GM12878 (cell line): ENCODE measurements at regions of chrX and their contacts with region 1.

Region 1: GRCh38 chrX:103533511-103534216 is 14.4 kb upstream of the RAB40A start:
- DNase-seq: peak; percentile 21
- ATAC-seq: peak; percentile 82
- H3K4me3 ChIP-seq: no peak overlapping the region
- H3K27ac ChIP-seq: no peak overlapping the region
- H3K4me1 ChIP-seq: no peaks in the 10 kb centered on the region
- H3K27me3 ChIP-seq: no peaks in the 10 kb centered on the region
- CTCF ChIP-seq: peak; percentile 67 to 89 (median 82)
- EP300 ChIP-seq: no peak
- POLR2A ChIP-seq: no peak
- RAD21 ChIP-seq: peak; percentile 86

Region 2: DNA sequence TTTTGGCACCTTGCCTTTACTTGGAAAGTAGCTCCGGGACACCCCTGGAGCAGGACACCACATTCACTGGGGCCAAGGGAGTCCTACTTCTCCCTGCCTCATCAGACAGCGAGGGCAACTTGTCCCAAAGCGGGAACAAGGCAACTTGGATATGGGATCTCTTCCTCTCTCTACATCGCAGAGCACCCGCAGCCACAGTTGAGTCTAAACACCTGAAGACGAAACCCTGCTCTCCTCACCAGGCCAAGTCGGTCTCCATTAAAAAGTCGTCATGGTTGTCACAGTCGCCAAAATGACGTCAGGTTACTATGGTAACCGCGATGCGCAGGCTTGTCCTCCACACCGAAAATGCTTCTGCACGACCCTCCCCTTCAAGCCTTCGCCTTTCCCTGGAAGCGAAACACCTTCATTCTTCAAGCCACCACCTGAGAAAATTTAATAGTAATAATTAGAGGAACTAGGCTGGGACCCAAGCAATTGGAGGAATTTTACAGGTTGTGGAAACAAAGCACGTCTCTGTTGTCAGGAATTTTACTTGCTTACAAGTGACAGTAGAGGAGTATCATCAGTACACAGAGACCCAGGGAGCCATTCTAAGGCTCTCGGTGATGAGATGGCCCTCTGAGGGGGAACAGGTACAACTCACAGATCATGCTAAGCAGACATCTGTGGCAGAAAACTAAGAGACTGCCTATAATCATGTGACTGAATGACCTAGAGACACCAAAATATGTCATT is 21.2 kb after region 1 on chrX:
- CTCF ChIA-PET with region 1: no interaction called
- POLR2A ChIA-PET with region 1: no interaction called
- RAD21 ChIA-PET with region 1: no interaction called
- SMC1A ChIA-PET with region 1: no interaction called
- in situ Hi-C with region 1: no loop called
- intact Hi-C with region 1: no loop called
- DNase-seq: no peak
- ATAC-seq: peak; percentile 94
- H3K4me3 ChIP-seq: peak overlapping the region; percentile 58
- H3K27ac ChIP-seq: peak overlapping the region; percentile 35
- H3K4me1 ChIP-seq: no peaks in the 10 kb centered on the region; the same call in 1 of the 2 replicates
- H3K27me3 ChIP-seq: no peaks in the 10 kb centered on the region; a peak in 1 of 4 replicates
- CTCF ChIP-seq: no peak
- EP300 ChIP-seq: no peak
- POLR2A ChIP-seq: peak; percentile 66
- RAD21 ChIP-seq: no peak

Region 3: DNA sequence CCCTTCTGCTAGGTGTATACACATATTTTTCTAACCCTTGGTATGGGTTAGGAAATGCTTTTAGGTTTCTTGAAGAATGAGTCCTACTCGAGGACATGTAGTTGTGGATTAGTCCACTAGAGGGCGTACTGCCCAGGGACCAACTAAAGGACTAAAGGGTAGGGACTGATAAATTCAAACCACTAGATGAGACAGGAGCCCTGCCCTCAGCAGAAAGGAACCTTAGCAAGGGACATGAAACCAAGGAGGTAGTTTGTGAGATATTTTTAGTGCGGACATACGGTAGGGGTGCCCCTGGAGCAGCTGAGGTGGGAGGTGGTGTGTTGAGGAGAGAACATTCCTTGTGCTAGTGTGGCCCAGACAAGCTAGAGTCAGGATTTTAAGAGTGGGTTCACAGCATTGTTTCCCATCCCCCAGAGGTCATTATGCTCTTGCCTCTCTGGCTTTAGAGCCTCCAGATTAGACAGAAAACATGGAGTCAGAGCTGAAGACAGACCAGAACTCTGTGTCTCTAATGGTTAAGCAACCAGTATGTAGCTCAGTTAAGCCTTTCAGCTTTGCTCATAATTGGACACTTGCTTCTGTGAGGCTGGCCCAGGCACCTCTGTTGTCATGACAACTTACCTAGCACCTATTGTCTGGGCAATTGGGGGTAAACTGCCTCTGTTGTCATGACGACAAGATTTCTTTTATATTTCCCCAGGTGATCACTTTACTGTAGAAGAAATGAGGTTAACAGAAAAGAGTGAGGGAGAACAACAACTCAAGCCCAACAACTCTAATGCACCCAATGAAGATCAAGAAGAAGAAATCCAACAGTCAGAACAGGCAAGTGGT is 178.1 kb after region 1 on chrX:
- CTCF ChIA-PET with region 1: interaction called, 9 read pairs
- POLR2A ChIA-PET with region 1: no interaction called
- RAD21 ChIA-PET with region 1: no interaction called
- SMC1A ChIA-PET with region 1: interaction called, 5 read pairs
- in situ Hi-C with region 1: no loop called
- intact Hi-C with region 1: loop called (anchors 2 kb)
- DNase-seq: no peak
- ATAC-seq: peak; percentile 82
- H3K4me3 ChIP-seq: no peak overlapping the region
- H3K27ac ChIP-seq: no peak overlapping the region
- H3K4me1 ChIP-seq: no peaks in the 10 kb centered on the region
- H3K27me3 ChIP-seq: no peaks in the 10 kb centered on the region
- CTCF ChIP-seq: peak; percentile 61 to 76 (median 72)
- EP300 ChIP-seq: no peak
- POLR2A ChIP-seq: no peak
- RAD21 ChIP-seq: peak; percentile 50

Region 4: GRCh38 chrX:103817502-103817901 is 283.8 kb after region 1 on chrX:
- CTCF ChIA-PET with region 1: interaction called, 8 read pairs
- POLR2A ChIA-PET with region 1: interaction called, 5 read pairs
- RAD21 ChIA-PET with region 1: interaction called, 3 read pairs
- SMC1A ChIA-PET with region 1: interaction called, 4 read pairs
- in situ Hi-C with region 1: loop called (anchors 5 kb)
- intact Hi-C with region 1: loop called (anchors 1 kb)
- DNase-seq: peak; percentile 11
- ATAC-seq: peak; percentile 82
- H3K4me3 ChIP-seq: no peak overlapping the region
- H3K27ac ChIP-seq: no peak overlapping the region
- H3K4me1 ChIP-seq: no peaks in the 10 kb centered on the region
- H3K27me3 ChIP-seq: no peaks in the 10 kb centered on the region
- CTCF ChIP-seq: peak; percentile 45 to 60 (median 55); a peak in 5 of 6 replicates
- EP300 ChIP-seq: no peak
- POLR2A ChIP-seq: no peak
- RAD21 ChIP-seq: peak; percentile 58

Region 5: GRCh38 chrX:103823591-103823990 is 289.9 kb after region 1 on chrX:
- CTCF ChIA-PET with region 1: interaction called, 4 read pairs
- POLR2A ChIA-PET with region 1: interaction called, 5 read pairs
- RAD21 ChIA-PET with region 1: no interaction called
- SMC1A ChIA-PET with region 1: interaction called, 4 read pairs
- in situ Hi-C with region 1: loop called (anchors 5 kb)
- intact Hi-C with region 1: no loop called
- DNase-seq: no peak
- ATAC-seq: no peak
- H3K4me3 ChIP-seq: no peak overlapping the region
- H3K27ac ChIP-seq: no peak overlapping the region
- H3K4me1 ChIP-seq: no peaks in the 10 kb centered on the region
- H3K27me3 ChIP-seq: no peaks in the 10 kb centered on the region
- CTCF ChIP-seq: no peak
- EP300 ChIP-seq: no peak
- POLR2A ChIP-seq: no peak
- RAD21 ChIP-seq: no peak

Region 6: DNA sequence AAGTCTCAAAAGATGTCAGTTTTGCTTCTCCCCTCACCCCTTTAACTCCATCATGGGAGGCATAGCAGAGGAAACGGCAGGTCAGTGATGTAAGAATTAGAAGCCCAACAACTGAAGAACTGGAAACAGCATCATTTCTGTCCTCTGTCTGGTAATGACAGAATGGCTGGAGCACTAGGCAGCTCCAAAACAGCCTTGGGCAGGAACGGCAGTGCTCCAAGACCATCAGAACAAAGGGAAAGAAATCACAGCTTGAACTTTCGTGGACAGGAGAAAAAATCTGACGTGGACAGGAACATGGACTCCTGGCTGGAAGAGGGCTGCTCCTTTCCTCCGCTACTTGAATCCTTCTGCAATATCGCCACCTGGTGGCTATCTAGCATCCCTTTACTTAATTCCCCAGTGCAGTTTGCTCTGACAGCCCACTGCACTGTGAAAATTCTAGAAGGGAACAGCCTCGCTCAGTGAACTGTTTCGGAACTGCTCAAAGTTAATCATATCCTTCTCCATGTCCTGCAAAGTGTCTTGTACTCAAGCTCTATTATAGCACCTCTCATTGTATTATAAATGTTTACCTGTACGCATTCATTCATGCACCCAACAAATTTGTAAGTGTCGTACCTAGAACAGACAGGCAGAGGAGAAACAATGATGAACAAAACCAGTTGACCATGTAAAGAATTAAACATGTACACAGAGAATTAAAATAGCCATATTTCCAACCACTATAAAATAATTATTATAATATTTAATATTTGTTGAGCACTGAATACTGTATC is 602.8 kb after region 1 on chrX:
- CTCF ChIA-PET with region 1: no interaction called
- POLR2A ChIA-PET with region 1: no interaction called
- RAD21 ChIA-PET with region 1: no interaction called
- SMC1A ChIA-PET with region 1: no interaction called
- in situ Hi-C with region 1: no loop called
- intact Hi-C with region 1: loop called (anchors 10 kb)
- DNase-seq: peak; percentile 35
- ATAC-seq: peak; percentile 99
- H3K4me3 ChIP-seq: no peak overlapping the region
- H3K27ac ChIP-seq: no peak overlapping the region
- H3K4me1 ChIP-seq: no peaks in the 10 kb centered on the region
- H3K27me3 ChIP-seq: no peaks in the 10 kb centered on the region
- CTCF ChIP-seq: peak; percentile 71 to 77 (median 71)
- EP300 ChIP-seq: no peak
- POLR2A ChIP-seq: no peak
- RAD21 ChIP-seq: peak; percentile 83